ENCODE measurements at regions of chr1 and their contacts with region 1.

Region 1: DNA sequence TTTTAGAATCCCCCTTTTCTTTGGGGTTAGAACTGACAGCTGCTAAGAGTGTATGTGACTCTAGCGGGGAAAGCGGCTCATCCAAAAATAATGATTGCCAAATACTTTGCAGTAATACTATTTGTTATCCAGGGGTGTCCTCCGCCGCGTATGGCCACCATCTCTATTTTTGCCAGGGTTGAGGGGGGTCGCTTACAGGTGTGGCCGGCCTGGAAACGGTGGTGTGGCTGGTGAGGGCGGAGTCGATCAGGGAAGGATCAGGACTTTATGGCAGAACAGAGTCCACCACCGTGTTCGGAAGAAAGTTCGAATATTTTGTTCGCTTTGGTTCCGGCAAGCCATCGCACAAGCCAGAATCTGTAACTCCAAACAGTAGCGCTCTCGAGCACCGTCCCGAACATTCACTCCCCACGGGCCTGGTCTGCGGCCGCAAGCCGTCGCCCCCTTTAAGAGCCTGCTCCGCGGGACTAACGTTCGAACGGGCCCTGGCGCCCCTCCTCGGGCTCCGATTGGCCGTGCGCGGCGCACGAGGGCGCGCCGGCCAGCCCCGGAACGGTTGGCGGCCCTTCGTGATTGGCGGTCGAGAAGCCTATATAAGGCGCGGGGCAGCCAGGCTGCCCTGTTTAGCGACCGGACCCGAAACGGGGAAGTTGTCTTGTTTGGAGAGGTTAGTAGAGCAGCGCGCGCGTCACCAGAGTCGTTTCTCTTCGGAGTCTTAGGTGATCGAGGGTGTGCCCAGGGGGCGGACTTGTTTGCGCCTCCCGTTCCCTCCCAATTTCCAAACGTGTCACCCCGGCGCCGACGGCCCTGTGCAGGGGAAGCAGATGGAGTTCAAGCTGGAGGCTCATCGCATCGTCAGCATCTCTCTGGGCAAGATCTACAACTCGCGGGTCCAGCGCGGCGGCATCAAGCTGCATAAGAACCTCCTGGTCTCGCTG is at the start of gene IER5:
- DNase-seq: peak; percentile 99
- H3K4me3 ChIP-seq: peak within 1 kb of the TSS; percentile 60
- H3K27ac ChIP-seq: peak within 1 kb of the TSS; percentile 96
- H3K4me1 ChIP-seq: peaks cover 4% of the 10 kb centered on the region
- H3K27me3 ChIP-seq: no peaks in the 10 kb centered on the region
- CTCF ChIP-seq: no peak
- total RNA-seq, gene IER5: 19.6 to 20.1 TPM

Region 2: GRCh38 chr1:180527101-180527669 is 561.2 kb before region 1 on chr1:
- intact Hi-C with region 1: loop called (anchors 5 kb)
- DNase-seq: no peak
- H3K4me3 ChIP-seq: no peak overlapping the region
- H3K27ac ChIP-seq: no peak overlapping the region
- H3K4me1 ChIP-seq: no peaks in the 10 kb centered on the region
- H3K27me3 ChIP-seq: no peaks in the 10 kb centered on the region
- CTCF ChIP-seq: no peak

Region 3: DNA sequence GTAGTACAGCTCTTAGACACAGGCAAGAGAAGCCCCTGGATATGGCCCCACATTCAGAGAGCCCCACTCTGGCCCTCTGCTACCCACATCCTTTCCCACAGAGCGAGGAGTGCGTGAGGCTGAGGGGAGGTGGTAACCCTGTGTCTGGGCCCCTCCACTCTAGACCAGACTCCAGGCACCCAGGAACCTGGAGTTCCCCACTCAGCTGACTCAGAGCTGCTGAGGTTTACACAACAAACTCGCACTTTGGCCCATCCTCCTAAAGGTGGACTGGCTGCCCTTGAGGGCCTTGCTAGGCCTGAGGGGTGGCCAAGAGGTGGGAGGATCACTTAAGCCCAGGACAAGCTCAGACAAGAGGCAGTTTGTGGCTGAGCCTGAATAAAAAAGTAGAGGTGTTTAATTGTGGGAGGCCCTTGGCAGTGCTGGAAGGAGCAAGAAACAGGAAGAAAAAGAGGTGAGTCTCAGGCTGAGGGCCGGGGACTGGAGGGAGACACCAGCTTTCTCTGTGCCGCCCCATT is 43.8 kb before region 1 on chr1:
- intact Hi-C with region 1: loop called (anchors 5 kb)
- DNase-seq: peak; percentile 71
- H3K4me3 ChIP-seq: no peak overlapping the region
- H3K27ac ChIP-seq: no peak overlapping the region
- H3K4me1 ChIP-seq: peaks cover 3% of the 10 kb centered on the region
- H3K27me3 ChIP-seq: no peaks in the 10 kb centered on the region
- CTCF ChIP-seq: no peak